GM13977 (cell line): ENCODE measurements at regions of chr4 and their contacts with region 1.

Region 1: DNA sequence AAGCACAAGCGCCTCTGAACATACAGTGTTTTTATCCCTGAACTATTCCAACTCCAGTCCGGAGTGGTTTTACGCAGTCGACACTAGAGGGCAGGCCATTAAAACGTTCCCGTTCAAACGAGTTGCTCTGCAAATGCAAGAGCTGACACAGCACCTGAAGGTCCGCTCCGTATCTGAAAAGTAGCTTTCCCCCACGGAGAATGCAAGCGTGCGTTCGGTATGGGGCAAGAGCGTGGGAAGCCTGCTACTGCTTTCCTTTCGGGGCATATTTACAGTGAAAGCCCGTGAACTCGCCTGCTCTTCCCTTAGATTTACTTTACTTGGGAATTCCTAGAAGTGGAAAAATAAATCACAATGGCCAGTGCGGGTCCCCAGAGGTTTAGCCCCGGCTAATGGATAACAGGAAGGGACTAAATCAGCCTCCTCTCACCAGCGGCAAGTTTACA is 190.8 kb downstream of the TSPAN5 start:
- DNase-seq: peak; percentile 70
- CTCF ChIP-seq: peak; percentile 80

Region 2: DNA sequence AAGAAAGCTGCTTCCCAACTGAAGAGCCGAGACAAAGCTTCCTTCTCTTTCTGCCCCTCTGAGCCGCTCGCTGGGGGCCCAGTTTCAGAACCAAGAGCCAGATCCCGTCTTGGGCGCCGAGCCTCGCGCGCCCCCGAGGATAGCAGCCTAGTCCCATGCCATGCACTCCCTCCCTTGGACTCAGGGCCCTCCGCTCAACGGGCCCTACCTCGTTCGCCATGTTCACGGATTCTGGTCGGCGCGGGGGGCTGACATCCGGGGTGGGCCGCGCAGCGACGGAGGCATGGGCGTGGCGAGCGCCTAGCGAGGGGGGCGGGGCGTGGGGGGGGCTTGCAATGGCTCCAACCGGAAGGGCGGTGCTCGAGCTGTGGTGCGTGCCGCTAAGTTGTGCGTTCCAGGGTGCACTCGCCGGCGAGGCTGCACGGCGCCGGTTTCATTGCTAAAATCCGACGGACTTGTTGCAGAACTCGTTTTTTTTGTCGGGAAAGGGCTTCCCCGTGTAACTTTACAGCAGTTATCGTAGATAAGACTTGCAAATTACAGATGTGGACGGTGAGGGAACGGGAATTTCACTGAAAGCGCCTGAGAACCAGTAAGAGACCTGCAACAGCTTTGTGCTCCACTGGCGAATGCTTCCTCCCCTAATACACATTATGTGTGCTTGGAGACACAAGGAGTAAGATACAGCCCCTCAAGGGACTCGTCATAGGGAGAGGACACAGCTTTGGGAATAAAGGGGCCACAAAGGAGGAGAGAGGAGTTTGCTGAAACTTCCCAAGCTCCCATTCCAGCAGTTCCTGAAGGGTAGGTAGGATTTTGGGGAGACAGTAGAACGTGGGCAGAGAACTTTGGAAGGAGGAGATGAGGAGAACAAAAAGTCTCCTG is 621.1 kb after region 1 on chr4 and contains the start of gene ADH5:
- in situ Hi-C with region 1: loop called (anchors 25 kb)
- DNase-seq: peak; percentile 92
- CTCF ChIP-seq: no peak

Region 3: GRCh38 chr4:99405433-99406115 is 937.9 kb after region 1 on chr4:
- in situ Hi-C with region 1: loop called (anchors 25 kb)
- DNase-seq: peak; percentile 12
- CTCF ChIP-seq: peak; percentile 89